ENCODE measurements at regions of chr11 and their contacts with region 1.

Region 1: DNA sequence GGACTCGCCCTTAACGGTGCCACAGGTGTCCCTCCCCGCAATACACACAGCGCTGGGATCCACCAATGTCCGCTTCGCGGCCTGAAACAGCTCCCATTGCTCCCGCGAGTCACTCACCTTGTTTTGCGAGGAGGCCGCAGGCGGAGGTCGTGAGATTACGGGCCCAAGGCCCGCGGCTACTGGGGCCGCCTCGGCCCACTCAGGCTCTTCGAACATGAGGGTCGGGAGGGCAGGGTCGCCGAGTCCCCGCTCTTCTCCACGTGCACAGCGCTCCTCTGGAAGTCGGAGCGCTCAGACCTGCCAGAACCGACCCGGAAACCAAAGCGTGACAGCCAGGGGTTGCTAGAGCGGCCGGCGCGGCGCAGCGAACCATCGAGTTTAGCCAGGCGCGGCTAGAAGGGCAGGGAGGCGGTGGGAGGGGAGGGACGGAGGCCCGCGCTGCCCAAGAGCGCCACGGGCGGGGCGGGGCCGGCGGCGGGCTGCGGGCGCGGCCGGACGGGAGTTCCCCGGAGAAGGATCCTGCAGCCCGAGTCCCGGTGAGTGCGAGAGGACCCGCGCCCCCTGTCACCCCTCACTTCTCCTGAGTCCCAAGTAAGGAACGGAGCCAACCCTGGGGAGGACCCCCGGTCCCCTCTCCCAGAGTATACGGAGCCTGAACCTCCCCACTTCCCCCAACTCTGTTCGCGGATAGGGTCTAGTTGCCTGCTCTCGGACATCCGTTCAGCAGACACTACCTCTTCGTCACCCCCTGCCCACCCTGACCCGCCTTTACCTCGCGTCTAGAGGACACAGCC is at the starts of genes ILK and RRP8:
- DNase-seq: peak; percentile 59 to 95
- H3K4me3 ChIP-seq: peak within 1 kb of the TSS; percentile 64 to 92
- H3K27ac ChIP-seq: peak within 1 kb of the TSS; percentile 95 to 97
- H3K4me1 ChIP-seq: peaks cover 25 to 34% of the 10 kb centered on the region in 2 donors
- H3K27me3 ChIP-seq: no peaks in the 10 kb centered on the region
- CTCF ChIP-seq: peak in 1 of 3 experiments; percentile 40
- total RNA-seq, gene ILK: 183 TPM
- total RNA-seq, gene RRP8: 9.2 TPM

Region 2: DNA sequence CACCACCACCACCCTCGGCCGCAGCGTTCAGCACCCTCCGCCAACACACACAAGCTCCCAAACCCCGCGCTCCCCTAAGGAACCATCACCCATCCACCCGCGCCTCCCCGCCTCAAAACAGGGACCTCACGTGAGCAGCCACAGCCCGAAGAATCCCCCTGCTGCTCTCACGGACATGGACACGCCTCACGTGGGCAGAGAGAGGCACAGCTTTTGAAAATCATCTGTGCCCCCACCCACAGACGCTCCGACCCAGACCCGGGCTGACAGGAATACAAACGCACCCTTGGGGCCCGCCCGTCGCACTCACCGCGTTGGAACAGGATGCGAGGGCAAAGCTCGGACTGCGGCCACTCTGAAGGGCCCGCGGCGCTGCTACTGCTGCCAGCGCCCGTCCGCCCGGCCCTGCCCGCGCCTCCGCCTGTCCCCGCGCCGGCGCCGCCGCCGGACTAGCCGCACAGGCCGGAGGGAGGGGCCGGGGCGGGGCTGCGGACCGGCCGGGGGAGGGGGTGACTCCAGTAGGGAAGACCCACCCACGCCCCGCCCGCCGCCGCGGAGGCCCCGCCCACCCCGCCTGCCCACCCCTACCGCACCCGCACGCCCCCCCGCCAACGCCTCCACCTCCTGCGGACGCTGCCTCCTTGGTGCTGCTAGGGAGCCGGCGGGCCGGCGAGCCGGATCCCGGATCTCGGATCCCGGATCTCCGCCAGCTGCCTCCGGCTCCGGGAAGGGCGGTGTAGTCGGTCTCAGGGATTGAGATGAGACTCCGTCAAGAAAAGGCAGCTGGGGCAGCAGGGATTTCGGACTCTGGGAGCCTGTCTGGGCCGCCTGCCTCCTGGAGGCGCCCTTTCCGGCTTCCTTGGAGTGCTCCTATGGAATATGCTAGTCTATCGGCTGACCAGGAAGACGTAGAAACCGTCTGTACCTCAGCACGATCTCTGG is 129.7 kb before region 1 on chr11 and contains the start of gene TRIM3:
- intact Hi-C with region 1: loop called (anchors 2 kb)
- DNase-seq: peak; percentile 74 to 96
- H3K4me3 ChIP-seq: peak within 1 kb of the TSS; percentile 85 to 88
- H3K27ac ChIP-seq: peak within 1 kb of the TSS; percentile 94 to 96
- H3K4me1 ChIP-seq: peaks cover 7 to 24% of the 10 kb centered on the region in 2 donors
- H3K27me3 ChIP-seq: no peaks in the 10 kb centered on the region
- CTCF ChIP-seq: peak in 2 of 3 experiments; percentile 22 to 39
- total RNA-seq, gene TRIM3: 33.8 TPM

Region 3: DNA sequence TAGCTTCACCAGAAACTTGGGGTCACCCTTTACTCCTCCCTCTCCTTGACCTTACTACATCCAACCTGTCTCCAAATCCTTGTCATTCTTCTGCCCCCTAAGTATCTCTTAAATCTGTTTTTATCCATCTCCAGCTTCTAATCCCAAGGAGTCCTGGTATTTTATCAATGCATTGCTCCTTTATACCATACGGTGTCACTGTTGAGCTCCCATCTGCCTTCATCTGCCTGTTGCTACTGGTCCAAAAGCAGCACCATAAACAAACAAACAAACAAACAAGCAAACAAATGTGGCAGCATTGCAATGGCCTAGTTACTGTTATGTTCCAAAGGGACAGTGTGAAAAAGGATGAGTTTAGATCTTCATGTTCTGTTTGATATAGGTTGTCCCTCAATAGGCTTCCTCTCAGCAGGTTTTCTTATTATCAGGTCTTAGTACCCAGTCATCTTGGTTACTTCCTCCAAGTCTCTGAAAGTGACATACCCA is 72.2 kb before region 1 on chr11:
- intact Hi-C with region 1: loop called (anchors 2 kb)
- DNase-seq: no peak
- H3K4me3 ChIP-seq: no peak overlapping the region
- H3K27ac ChIP-seq: no peak overlapping the region
- H3K4me1 ChIP-seq: no peaks in the 10 kb centered on the region
- H3K27me3 ChIP-seq: no peaks in the 10 kb centered on the region
- CTCF ChIP-seq: peak; percentile 67 to 70 (median 70)

Region 4: DNA sequence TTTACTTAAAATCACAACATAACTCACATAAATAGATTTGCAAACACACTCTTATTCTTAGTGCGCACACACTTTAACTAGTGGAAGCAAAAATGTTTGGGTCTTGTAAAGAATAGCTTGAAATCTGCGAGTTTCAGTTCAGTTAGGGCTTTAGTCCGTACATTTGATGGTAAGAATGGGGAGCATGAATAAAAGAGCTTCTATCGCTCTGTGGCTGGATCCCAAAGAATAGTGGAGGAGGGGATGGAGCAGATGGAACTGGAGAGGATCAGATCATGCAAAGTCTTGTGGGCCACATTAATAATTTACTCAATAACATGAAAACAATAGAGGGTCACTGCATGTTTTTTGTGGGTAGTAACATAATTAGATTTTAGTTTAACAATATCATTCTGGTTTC is 62.1 kb before region 1 on chr11:
- intact Hi-C with region 1: no loop called
- DNase-seq: no peak
- H3K4me3 ChIP-seq: no peak overlapping the region
- H3K27ac ChIP-seq: no peak overlapping the region
- H3K4me1 ChIP-seq: no peaks in the 10 kb centered on the region
- H3K27me3 ChIP-seq: no peaks in the 10 kb centered on the region
- CTCF ChIP-seq: no peak

Measured in ascending aorta (tissue), 2 donors.